Cardiac septum (tissue), 1 donor: ENCODE measurements at regions of chr4 and their contacts with region 1.

Region 1: GRCh38 chr4:174365018-174365587 is 81.4 kb downstream of the CEP44 start:
- DNase-seq: no peak

Region 2: GRCh38 chr4:173685165-173685830 is 679.8 kb before region 1 on chr4:
- intact Hi-C with region 1: no loop called
- DNase-seq: no peak

Region 3: DNA sequence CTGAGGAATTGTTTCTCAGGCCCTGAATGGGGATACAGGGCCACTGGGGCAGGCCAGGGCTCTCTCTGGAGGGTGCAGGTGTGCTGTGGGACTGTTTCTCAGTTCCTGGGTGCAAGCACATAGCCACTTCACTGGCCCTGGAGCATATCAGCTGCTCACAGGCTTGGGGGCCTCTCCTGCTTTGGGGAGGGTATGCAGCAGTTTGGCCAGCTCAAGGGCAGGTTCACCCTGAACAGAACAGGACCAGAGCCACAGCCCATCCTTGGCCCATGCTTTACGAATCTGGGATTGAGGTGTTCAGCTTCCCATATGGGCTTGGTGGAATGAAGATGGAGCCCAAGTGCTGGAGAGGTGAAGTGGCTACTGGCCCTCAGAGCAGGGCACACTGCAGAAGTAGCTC is 268.1 kb before region 1 on chr4:
- intact Hi-C with region 1: no loop called
- DNase-seq: no peak

Region 4: GRCh38 chr4:174193438-174194374 is 171.4 kb before region 1 on chr4:
- intact Hi-C with region 1: no loop called
- DNase-seq: no peak

Region 5: GRCh38 chr4:174631901-174632758 is 267.0 kb after region 1 on chr4:
- intact Hi-C with region 1: loop called (anchors 2 kb)
- DNase-seq: no peak

Region 6: DNA sequence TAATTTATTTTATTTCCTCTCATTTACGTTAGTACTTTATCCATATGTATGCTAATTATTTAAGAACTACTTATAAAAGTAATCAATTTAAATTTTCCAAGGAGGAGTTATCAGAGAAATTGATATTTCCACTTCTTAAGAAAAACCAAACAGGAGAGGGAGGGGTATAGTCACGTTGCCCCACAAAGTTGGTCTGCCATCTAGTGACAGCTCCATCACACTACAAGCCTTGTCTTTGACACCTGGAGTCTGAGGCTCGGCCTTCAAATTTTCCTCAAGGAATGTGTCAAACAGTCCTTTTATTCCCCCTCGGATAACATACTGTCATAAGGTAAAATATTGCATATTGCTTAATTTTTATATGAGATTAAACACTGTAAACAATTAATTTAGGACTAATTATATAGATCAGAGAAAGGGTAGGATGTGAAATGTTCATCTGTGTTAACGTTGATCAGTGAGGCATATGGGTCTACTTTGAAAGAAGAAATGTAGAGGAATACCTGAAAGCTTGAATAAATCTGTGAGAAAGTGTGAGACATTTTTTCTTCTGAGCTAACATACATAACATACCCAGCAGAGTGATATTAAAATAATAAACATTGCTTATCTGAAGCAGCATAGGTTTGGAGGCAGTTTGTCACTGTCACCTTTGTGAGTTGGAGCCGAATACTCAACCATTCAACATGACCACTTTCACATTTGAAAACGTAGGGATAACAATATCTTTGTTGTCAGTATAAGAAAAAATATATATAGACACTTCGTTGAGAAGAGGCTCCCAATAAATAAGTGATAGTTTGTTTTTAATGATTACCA is 349.5 kb after region 1 on chr4:
- intact Hi-C with region 1: loop called (anchors 5 kb)
- DNase-seq: no peak